ENCODE measurements at regions of chr11 and their contacts with region 1.

Region 1: GRCh38 chr11:124673333-124674167 is at the starts of genes SIAE and SPA17:
- DNase-seq: peak; percentile 95
- H3K4me3 Mint-ChIP-seq: peak within 1 kb of the TSS; percentile 88
- H3K27ac Mint-ChIP-seq: peak within 1 kb of the TSS; percentile 98
- H3K4me1 Mint-ChIP-seq: peaks cover 12% of the 10 kb centered on the region
- H3K27me3 Mint-ChIP-seq: no peaks in the 10 kb centered on the region
- CTCF ChIP-seq: no peak
- total RNA-seq, gene SIAE: 20.7 and 21.7 TPM in 2 replicates
- total RNA-seq, gene SPA17: 12.0 and 18.1 TPM in 2 replicates

Region 2: DNA sequence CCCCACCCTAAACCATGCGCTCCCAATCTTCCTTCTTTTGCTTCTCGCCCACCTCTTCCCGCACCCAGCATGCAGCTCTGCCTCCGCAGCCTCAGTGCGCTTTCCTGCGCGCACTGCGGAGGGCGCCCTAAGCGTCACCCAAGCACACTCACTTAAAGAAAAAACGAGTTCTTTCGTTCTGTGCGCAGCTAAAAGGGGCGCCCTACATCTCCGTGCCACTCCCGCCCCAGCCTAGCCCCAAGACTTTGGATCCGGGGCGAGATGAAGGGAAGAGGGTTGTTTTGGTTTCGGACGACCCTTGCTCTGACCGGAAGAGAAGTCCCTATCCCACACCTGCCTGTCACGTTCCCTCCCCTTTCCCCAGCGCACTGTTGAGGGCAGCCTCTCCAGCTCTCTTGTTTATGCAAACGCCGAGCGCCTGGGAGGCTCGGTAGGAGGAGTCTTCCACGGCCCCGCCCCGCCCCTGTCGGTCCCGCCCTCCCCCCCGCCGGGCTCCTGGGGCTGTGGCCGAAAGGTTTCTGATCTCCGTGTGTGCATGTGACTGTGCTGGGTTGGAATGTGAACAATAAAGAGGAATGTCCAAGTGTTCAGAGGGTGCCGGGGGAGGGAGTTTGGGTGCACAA is 73.2 kb after region 1 on chr11:
- CTCF ChIA-PET with region 1: interaction called, 10 read pairs
- POLR2A ChIA-PET with region 1: interaction called, 6 read pairs
- intact Hi-C with region 1: loop called (anchors 5 kb)
- DNase-seq: peak; percentile 90
- H3K4me3 Mint-ChIP-seq: peak overlapping the region; percentile 83
- H3K27ac Mint-ChIP-seq: peak overlapping the region; percentile 37
- H3K4me1 Mint-ChIP-seq: peaks cover 6% of the 10 kb centered on the region
- H3K27me3 Mint-ChIP-seq: no peaks in the 10 kb centered on the region
- CTCF ChIP-seq: peak; percentile 50

Region 3: DNA sequence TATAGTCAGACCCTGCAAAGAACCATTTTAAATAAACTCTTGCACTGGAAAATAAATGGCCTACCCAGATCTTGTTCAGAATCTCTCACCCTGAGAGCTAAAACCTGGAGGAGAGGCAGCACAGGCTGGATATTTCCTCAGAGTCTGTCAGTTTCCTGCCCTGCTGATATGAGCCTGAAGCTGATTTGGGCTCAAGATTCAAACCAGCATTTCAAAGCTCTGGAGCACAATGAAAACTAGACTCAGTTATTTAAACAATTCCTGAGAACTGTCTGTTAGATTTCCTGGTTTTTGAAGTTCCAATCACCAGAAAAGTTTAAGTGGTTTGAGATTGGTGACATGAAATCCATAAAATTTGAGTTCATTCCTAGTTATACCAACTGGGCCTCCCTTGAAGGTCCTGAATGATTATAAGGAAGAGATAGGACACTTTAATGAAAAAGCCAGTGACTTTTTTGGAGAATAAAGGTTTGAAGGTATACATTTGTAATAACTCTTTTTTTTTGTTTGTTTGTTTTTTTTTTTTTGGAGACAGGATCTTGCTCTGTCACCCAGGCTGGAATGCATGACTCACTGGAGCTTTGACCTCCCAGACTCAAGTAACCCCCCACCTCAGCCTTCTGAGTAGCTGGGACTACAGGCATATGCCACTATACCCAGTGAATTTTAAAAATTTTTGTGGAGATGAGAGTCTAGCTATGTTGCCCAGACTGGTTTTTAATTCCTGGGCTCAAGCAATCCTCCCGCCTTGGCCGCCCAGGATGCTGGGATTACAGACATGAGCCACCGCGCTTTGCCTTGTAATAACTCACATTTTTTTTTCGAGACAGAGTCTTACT is 96.5 kb after region 1 on chr11:
- CTCF ChIA-PET with region 1: interaction called, 112 read pairs
- POLR2A ChIA-PET with region 1: no interaction called
- intact Hi-C with region 1: no loop called
- DNase-seq: peak; percentile 56
- H3K4me3 Mint-ChIP-seq: no peak overlapping the region
- H3K27ac Mint-ChIP-seq: peak overlapping the region; percentile 27
- H3K4me1 Mint-ChIP-seq: no peaks in the 10 kb centered on the region
- H3K27me3 Mint-ChIP-seq: no peaks in the 10 kb centered on the region
- CTCF ChIP-seq: no peak

Region 4: GRCh38 chr11:124800226-124800929 is 126.8 kb after region 1 on chr11 and contains the start of gene MSANTD2:
- CTCF ChIA-PET with region 1: interaction called, 36 read pairs
- POLR2A ChIA-PET with region 1: interaction called, 13 read pairs
- intact Hi-C with region 1: no loop called
- DNase-seq: peak; percentile 60
- H3K4me3 Mint-ChIP-seq: peak within 1 kb of the TSS; percentile 83
- H3K27ac Mint-ChIP-seq: peak within 1 kb of the TSS; percentile 84
- H3K4me1 Mint-ChIP-seq: peaks cover 11% of the 10 kb centered on the region
- H3K27me3 Mint-ChIP-seq: no peaks in the 10 kb centered on the region
- CTCF ChIP-seq: no peak
- total RNA-seq, gene MSANTD2: 14.2 and 15.3 TPM in 2 replicates

Region 5: DNA sequence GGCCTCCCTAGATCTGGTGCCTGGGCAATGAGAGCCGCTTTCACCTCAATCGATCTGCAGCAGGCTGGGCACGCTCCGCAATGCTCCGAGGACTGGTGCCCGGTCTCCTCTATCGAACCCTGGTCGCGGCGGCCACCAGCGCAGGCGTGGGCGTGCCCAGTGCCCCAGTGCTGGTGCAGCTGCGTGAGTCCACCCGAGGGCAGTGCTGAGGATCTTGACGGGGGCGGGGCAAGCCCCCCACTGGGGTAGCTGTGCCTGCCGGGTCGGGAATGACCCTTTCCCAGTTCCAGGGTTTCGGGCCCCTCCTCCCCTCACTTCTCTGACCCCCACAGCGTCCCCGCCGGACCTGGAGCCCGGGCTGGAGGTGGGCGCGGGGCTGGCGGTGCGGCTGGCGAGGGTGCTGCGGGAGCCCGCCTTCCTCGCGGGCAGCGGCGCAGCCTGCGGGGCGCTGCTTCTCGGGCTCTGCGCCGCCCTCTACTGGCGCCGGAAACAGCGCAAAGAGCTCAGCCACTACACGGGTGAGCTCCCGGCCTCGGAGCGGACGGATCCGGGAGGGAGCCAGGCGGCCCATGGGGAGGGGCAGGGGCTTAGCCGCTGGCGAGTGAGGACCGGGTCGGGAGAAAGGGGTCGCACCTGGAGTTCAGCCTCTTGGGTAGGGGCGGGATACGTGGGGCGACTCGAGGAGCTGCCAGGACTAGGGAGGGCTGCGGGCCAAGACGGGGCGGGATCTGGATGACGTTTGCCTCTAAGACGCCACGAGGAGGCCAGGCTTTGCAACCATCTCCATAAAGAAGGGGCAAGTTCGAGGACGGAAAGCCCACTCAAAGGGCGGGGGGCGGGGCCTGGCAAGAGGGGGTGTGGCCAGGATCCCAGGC is 202.6 kb after region 1 on chr11:
- CTCF ChIA-PET with region 1: interaction called, 11 read pairs
- POLR2A ChIA-PET with region 1: interaction called, 3 read pairs
- intact Hi-C with region 1: no loop called
- DNase-seq: peak; percentile 95
- H3K4me3 Mint-ChIP-seq: peak overlapping the region; percentile 96
- H3K27ac Mint-ChIP-seq: peak overlapping the region; percentile 95
- H3K4me1 Mint-ChIP-seq: peaks cover 23% of the 10 kb centered on the region
- H3K27me3 Mint-ChIP-seq: peaks cover 20% of the 10 kb centered on the region
- CTCF ChIP-seq: peak; percentile 45

Region 6: GRCh38 chr11:125224391-125225010 is 551.0 kb after region 1 on chr11:
- CTCF ChIA-PET with region 1: no interaction called
- POLR2A ChIA-PET with region 1: no interaction called
- intact Hi-C with region 1: no loop called
- DNase-seq: peak; percentile 43
- H3K4me3 Mint-ChIP-seq: no peak overlapping the region
- H3K27ac Mint-ChIP-seq: no peak overlapping the region
- H3K4me1 Mint-ChIP-seq: no peaks in the 10 kb centered on the region
- H3K27me3 Mint-ChIP-seq: peaks cover 18% of the 10 kb centered on the region
- CTCF ChIP-seq: no peak

Measured in MCF 10A (cell line).